Panc1 (cell line): ENCODE measurements at regions of chr3 and their contacts with region 1.

Region 1: GRCh38 chr3:138213398-138214085 is 26.4 kb downstream of the ARMC8 start:
- DNase-seq: no peak
- ATAC-seq: no peak
- H3K4me3 ChIP-seq: no peak overlapping the region
- H3K27ac ChIP-seq: no peak overlapping the region
- H3K4me1 ChIP-seq: no peaks in the 10 kb centered on the region
- H3K27me3 ChIP-seq: no peaks in the 10 kb centered on the region
- CTCF ChIP-seq: no peak

Region 2: GRCh38 chr3:138270245-138270644 is 56.7 kb after region 1 on chr3:
- CTCF ChIA-PET with region 1: no interaction called
- POLR2A ChIA-PET with region 1: interaction called, 15 read pairs
- in situ Hi-C with region 1: no loop called
- intact Hi-C with region 1: no loop called
- DNase-seq: no peak
- ATAC-seq: no peak
- H3K4me3 ChIP-seq: no peak overlapping the region
- H3K27ac ChIP-seq: no peak overlapping the region
- H3K4me1 ChIP-seq: no peaks in the 10 kb centered on the region
- H3K27me3 ChIP-seq: no peaks in the 10 kb centered on the region
- CTCF ChIP-seq: peak; percentile 9; the same call in 1 of the 2 replicates

Region 3: DNA sequence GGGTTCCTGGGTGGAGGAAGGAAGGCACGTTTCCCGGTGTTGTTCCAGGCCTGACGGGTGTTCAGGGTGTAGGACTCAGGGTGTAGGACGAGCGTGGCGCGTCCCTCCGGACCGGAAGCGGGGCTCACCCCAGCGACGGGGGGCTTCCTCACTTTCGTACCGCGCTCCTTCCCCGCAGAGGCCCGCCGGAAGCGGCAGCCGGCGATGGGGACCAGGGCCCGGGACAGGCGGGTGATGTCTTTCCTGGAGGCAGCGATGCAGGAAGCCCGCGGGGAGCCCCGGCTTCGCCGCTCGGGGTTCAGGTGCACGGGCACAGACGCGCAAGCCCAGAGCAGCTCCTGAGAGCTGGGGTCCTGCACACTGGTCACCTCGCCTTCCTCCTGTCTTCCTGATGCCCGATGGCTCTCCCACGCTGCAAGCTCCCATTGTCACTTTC is 746.9 kb after region 1 on chr3:
- CTCF ChIA-PET with region 1: no interaction called
- POLR2A ChIA-PET with region 1: no interaction called
- in situ Hi-C with region 1: no loop called
- intact Hi-C with region 1: no loop called
- DNase-seq: no peak
- ATAC-seq: no peak
- H3K4me3 ChIP-seq: no peak overlapping the region
- H3K27ac ChIP-seq: no peak overlapping the region
- H3K4me1 ChIP-seq: no peaks in the 10 kb centered on the region
- H3K27me3 ChIP-seq: 0 out of 2 replicates have a peak, but pooled peaks cover 2% of the 10 kb centered on the region
- CTCF ChIP-seq: no peak